Posterior vena cava (tissue), 2 donors: ENCODE measurements at regions of chr9 and their contacts with region 1.

Region 1: DNA sequence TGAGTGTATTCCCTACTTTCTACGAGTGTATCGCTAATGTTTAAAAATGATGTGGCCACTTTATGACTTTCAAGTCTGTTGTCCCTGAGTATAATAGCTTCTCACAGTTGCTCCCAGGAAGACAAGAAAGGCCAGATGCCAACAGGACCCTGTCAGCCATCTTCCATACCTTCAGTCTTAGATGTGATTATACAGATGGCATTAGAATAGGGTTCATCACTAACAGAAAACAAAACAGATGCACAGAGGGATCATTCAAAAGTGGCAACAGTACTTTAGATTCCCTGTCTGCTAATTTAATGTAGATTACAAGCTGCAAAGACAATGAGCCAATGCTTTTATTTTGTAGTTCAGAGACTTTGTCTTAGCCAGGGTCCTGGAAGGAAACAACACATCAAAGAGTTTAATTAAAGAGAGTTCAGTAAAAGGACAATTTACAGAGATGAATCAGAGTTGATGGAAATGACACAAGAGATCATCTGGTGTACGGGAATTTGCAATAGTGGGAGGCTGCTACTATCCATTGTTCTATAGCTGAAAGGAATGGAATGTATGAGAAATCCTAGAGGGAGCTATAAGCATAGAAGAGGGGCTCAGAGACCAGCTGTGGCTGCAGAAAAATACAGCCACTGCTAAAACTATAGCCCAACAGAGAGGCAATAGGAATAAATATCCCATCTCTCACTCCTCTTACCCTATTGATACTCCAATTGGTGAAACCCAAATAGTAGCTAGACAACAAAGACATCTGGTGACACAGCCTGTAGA is 393.7 kb upstream of the SMC2 start:
- DNase-seq: no peak

Region 2: GRCh38 chr9:103335461-103335860 is 364.9 kb before region 1 on chr9:
- intact Hi-C with region 1: no loop called
- DNase-seq: no peak

Region 3: GRCh38 chr9:103627731-103628130 is 72.6 kb before region 1 on chr9:
- intact Hi-C with region 1: loop called in 1 of 2 experiments (anchors 2 kb)
- DNase-seq: no peak